ENCODE measurements at regions of chr2 and their contacts with region 1.

Region 1: DNA sequence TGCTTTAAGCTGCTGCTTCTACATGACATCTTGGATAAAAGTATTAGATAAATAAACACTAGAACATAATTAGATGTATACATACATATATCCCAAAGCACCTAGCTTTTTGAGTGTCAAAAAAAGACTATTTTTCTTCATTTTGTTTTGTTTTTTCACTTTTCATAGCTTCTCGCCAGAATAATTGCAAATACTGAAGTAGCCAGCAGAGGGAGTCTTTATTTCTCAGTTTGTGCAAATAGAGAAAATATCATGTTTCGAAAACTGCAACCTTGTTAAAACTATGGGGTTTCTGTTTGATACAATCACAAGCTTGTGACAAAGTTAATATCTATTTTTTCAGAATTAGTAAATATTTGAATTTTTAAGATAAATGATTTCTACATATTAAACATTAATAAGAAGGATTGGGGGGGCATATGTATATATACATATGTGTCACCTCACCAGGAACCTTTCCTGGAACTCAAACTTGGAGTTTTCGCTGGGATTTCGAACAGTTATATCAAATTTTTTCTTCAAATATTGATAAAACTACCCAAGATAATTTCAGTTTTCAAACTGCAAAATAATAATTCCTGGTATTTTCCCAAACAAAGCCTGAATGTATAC is 61.0 kb downstream of the GRB14 start:
- DNase-seq: no peak
- H3K4me3 ChIP-seq: no peak overlapping the region
- H3K27ac ChIP-seq: no peak overlapping the region
- H3K4me1 ChIP-seq: peaks cover 0 to 10% (median 0%) of the 10 kb centered on the region in 3 donors
- H3K27me3 ChIP-seq: no peaks in the 10 kb centered on the region
- CTCF ChIP-seq: peak; percentile 27 to 67 (median 58)
- POLR2A ChIP-seq: no peak

Region 2: DNA sequence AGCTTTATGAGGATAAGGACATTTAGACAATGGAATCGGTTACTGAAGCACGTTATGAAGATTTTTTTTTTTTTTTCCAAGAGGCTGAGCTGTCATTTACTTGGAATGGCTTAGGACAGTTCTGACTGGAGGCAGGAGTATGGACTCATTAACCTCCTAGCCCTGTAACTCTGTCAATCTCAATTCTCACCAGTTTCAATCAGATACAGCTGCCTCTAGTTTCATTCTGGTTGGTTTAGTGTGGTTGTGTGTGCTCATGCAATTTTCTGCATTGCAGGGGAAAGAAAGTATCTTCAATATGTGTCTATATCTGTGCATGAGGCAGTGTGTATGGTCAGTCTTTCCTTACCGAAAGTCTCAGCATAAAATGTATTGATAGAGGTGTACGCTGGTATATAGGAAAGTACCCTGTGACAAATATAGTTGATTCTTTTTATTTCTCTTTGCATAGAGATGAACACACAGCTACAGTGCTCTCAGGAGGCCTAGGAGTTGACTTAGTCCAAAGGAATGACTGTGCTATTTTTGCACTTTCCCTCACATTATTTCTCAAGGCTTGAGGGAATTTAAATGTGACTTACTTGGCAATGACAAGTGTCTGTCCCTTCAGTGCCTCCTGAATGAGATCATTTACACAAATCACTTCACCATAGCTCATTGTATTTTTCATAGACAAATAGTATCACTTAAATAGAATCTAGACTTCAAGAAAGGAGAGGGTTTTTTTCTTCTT is 111.5 kb after region 1 on chr2:
- intact Hi-C with region 1: no loop called
- DNase-seq: no peak
- H3K4me3 ChIP-seq: no peak overlapping the region
- H3K27ac ChIP-seq: no peak overlapping the region
- H3K4me1 ChIP-seq: no peaks in the 10 kb centered on the region
- H3K27me3 ChIP-seq: no peaks in the 10 kb centered on the region
- CTCF ChIP-seq: no peak
- POLR2A ChIP-seq: no peak

Region 3: GRCh38 chr2:164717000-164717803 is 156.9 kb after region 1 on chr2:
- intact Hi-C with region 1: loop called (anchors 10 kb)
- DNase-seq: no peak
- H3K4me3 ChIP-seq: no peak overlapping the region
- H3K27ac ChIP-seq: no peak overlapping the region
- H3K4me1 ChIP-seq: peaks cover 0 to 9% (median 0%) of the 10 kb centered on the region in 3 donors
- H3K27me3 ChIP-seq: no peaks in the 10 kb centered on the region
- CTCF ChIP-seq: peak in 5 of 6 experiments; percentile 16 to 62 (median 51)
- POLR2A ChIP-seq: no peak

Region 4: DNA sequence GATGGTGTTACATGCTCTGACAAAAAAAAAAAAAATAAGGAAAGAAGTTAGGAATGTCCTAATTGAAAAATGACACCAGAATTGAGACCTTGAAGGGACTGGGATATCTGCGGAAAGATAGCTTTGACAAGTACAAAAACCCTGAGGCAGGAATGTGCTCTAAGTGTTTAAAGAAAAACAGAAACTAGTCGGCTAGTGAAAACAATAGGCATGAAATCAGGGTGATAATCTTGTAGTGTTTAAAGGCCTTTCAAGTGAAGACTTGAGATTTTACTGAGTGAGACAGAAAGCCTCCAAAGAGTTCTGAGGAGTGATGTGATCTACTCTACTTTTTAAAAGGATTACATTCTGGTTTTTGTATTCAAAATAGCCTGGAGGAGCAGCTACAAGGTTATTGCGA is 173.9 kb after region 1 on chr2:
- intact Hi-C with region 1: no loop called
- DNase-seq: no peak
- H3K4me3 ChIP-seq: no peak overlapping the region
- H3K27ac ChIP-seq: peak overlapping the region in 1 of 4 donors; percentile 52
- H3K4me1 ChIP-seq: peaks cover 3 to 29% (median 6%) of the 10 kb centered on the region in 3 donors
- H3K27me3 ChIP-seq: no peaks in the 10 kb centered on the region
- CTCF ChIP-seq: no peak
- POLR2A ChIP-seq: no peak

Region 5: DNA sequence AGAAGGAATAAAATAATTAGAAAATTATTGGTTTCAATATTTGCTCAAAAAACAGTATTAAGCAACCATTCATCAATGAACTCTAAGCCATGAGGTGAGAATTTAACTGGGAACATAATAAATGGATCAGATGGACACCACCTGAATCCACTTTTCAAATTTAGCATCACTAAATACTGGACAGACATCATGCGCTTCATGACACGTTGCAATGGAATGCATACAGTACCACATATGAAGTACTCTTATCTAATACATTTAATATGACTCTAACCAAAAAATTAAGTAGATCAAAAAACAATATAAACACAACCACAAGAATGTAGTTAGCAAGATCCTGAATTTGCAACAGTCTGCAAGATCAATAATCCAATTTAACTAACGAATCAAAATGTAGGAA is 204.7 kb after region 1 on chr2:
- intact Hi-C with region 1: no loop called
- DNase-seq: no peak
- H3K4me3 ChIP-seq: no peak overlapping the region
- H3K27ac ChIP-seq: no peak overlapping the region
- H3K4me1 ChIP-seq: peaks cover 0 to 20% (median 0%) of the 10 kb centered on the region in 3 donors
- H3K27me3 ChIP-seq: no peaks in the 10 kb centered on the region
- CTCF ChIP-seq: no peak
- POLR2A ChIP-seq: no peak

Measured in esophagus squamous epithelium (tissue), 5 donors.